ENCODE measurements at regions of chr1 and their contacts with region 1.

Region 1: DNA sequence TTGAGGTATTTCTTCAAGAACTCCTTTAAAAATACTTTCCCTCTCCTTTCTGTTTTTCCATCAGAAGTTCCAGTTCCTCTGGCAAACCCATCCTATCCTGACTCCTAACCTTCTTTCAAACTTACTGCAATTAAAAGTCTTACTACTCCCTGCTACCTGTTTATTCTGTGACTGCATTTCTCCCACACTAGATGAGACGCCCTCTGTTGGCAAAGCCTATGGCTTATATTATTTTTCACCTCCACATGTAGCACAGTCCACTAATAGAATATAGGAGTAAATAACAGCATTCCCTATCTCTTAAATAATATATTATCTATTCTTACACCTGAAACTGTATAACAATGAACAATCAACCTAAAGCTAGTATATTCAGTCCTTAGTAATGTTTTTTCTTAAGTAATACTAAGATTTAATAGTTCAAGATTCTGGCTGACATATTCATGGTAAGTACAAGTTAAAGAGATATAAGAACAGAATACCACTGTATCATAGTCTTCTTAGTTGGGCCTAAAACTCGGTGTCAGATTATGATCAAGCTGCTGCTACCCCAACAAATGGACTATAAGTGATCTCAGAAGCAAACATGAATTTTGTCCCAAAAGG is 54.8 kb downstream of the RAB3GAP2 start:
- DNase-seq: no peak
- H3K4me3 ChIP-seq: no peak overlapping the region
- H3K27ac ChIP-seq: no peak overlapping the region
- H3K27me3 ChIP-seq: no peaks in the 10 kb centered on the region
- CTCF ChIP-seq: peak; percentile 27; the same call in 1 of the 2 replicates

Region 2: GRCh38 chr1:220189750-220190347 is 27.6 kb before region 1 on chr1:
- CTCF ChIA-PET with region 1: interaction called, 14 read pairs
- POLR2A ChIA-PET with region 1: no interaction called
- DNase-seq: no peak
- H3K4me3 ChIP-seq: no peak overlapping the region
- H3K27ac ChIP-seq: no peak overlapping the region
- H3K27me3 ChIP-seq: no peaks in the 10 kb centered on the region
- CTCF ChIP-seq: peak; percentile 54

Region 3: DNA sequence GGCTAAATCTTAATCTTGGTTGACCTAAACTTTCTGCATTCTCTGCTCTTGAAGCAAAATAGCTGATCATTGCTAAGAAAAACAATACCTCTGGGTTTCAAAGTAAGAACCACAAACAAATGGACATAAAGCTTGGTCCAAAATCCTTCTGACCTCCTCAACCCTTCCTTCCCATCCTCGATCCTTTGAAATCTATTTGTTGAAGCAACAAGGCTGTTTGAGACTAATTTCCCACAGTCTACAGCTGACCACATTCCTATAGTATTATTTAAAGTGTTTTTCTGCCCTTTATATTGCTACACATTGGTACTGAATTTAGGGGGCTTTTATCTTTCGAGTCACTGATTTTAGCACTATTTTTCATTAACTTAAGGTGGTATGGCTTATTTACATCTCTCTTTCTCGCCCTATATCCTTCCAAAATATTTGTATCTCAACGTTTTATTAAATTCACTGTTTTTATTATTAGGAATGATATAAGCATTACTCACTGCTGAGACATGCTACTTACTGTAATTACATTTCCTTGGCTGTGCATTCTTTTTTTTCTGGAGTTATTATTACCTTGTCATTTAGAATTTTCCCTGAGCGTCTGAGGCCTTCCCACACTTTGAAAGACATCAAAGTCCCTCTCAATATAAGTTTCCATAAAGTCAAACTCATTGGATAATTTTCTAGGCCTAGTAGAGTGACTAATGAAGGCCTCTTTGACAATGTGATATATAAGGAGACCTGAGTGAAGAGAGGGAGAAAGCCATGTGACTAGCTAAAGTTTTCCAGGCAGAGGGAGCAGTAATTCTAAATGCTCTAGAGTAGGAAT is 19.1 kb before region 1 on chr1:
- CTCF ChIA-PET with region 1: interaction called, 12 read pairs
- POLR2A ChIA-PET with region 1: no interaction called
- DNase-seq: no peak
- H3K4me3 ChIP-seq: no peak overlapping the region
- H3K27ac ChIP-seq: no peak overlapping the region
- H3K27me3 ChIP-seq: no peaks in the 10 kb centered on the region
- CTCF ChIP-seq: no peak

Region 4: GRCh38 chr1:220229771-220230170 is 12.3 kb after region 1 on chr1:
- CTCF ChIA-PET with region 1: interaction called, 15 read pairs
- POLR2A ChIA-PET with region 1: no interaction called
- DNase-seq: no peak
- H3K4me3 ChIP-seq: no peak overlapping the region
- H3K27ac ChIP-seq: no peak overlapping the region
- H3K27me3 ChIP-seq: no peaks in the 10 kb centered on the region
- CTCF ChIP-seq: no peak